Ascending aorta (tissue), 2 donors: ENCODE measurements at regions of chr11 and their contacts with region 1.

Region 1: DNA sequence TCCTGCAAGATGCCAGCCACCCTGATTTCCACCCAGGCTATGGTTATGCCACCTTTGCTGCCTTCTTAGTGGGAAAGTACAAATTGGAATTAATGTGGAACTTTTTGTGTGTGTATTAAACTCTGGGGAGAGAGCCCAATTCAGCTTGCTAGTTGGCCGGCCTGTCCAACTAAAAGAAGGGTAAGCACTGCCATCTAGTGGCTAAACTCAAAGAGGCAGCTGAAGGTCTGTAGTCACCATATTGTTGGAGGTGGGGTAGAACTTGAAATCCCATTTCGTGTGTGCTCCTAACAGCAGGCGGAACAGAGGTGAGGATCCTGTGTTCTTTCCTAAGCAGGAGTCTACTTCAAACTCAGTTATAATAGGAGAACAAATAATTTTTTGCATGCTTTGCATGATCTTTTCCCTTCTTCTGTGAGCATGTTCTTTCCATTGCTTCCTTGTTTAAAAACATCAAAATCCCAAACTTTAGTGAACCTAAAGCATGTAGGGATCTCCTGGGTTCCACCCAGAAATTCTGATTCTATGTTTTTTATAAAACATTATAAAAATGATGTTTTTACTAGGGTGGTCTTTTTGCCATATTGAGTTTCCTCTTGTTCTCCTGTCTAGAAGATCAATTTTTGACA is 138.8 kb upstream of the SORL1-AS1 start:
- DNase-seq: peak in 1 of 2 donors; percentile 85
- H3K4me3 ChIP-seq: no peak overlapping the region
- H3K27ac ChIP-seq: no peak overlapping the region
- H3K4me1 ChIP-seq: peaks cover 5 to 11% of the 10 kb centered on the region in 2 donors
- H3K27me3 ChIP-seq: no peaks in the 10 kb centered on the region
- CTCF ChIP-seq: peak; percentile 68 to 86 (median 84)

Region 2: GRCh38 chr11:121249039-121249663 is 342.4 kb before region 1 on chr11:
- intact Hi-C with region 1: loop called (anchors 1 kb)
- DNase-seq: no peak
- H3K4me3 ChIP-seq: no peak overlapping the region
- H3K27ac ChIP-seq: no peak overlapping the region
- H3K4me1 ChIP-seq: no peaks in the 10 kb centered on the region
- H3K27me3 ChIP-seq: no peaks in the 10 kb centered on the region
- CTCF ChIP-seq: peak; percentile 23 to 77 (median 71)

Region 3: DNA sequence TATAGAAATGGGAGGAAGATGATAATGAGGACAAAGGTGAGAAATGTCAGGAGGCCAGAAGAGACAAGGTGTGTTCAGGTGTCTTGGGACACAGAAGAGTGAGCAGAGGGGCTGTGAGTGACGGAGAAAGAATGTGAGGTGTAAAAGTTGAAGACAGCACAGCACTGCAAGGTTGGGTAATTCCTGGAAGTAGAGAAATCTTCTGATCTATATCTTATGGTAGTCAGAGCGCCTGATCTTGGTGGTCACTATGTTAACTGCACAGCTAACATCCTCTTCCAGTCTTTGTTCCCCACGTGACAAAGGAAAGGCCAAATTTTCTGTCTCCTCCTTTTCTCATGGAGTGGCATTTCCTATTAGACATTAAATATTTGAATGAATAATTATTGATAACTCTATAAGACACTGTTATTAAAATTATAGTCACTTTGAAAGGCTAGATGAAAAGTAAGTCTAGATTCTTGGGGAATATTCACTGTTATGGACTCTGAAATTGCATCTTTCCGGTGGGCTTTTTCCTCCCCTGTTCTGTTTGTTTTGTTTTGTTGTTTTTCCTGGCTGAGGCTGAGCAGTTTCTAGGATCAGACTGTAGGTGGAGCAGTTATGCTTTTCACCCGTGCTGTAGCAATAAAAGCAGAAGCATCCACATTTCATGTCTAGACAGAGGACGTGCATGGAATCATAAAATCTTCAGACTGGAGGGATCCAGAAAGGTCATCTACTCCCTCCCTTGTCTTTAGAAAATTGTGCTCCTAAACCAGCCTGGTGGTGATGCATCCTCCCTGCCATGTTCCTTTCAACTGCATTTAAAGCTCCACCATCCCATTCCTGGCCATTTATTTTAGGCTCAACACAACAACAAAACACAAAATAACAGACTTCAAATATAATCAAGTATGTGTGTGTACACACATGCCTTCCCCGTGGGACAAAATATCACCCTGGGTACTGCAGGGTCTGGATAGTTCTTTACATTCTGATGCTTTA is 272.4 kb before region 1 on chr11:
- intact Hi-C with region 1: loop called (anchors 1 kb)
- DNase-seq: no peak
- H3K4me3 ChIP-seq: no peak overlapping the region
- H3K27ac ChIP-seq: no peak overlapping the region
- H3K4me1 ChIP-seq: no peaks in the 10 kb centered on the region
- H3K27me3 ChIP-seq: no peaks in the 10 kb centered on the region
- CTCF ChIP-seq: peak; percentile 55 to 72 (median 59)

Region 4: GRCh38 chr11:121464352-121464946 is 127.1 kb before region 1 on chr11:
- intact Hi-C with region 1: loop called (anchors 5 kb)
- DNase-seq: peak in 1 of 2 donors; percentile 82
- H3K4me3 ChIP-seq: no peak overlapping the region
- H3K27ac ChIP-seq: peak overlapping the region; percentile 77 to 78
- H3K4me1 ChIP-seq: peaks cover 13 to 31% of the 10 kb centered on the region in 2 donors
- H3K27me3 ChIP-seq: no peaks in the 10 kb centered on the region
- CTCF ChIP-seq: no peak

Region 5: DNA sequence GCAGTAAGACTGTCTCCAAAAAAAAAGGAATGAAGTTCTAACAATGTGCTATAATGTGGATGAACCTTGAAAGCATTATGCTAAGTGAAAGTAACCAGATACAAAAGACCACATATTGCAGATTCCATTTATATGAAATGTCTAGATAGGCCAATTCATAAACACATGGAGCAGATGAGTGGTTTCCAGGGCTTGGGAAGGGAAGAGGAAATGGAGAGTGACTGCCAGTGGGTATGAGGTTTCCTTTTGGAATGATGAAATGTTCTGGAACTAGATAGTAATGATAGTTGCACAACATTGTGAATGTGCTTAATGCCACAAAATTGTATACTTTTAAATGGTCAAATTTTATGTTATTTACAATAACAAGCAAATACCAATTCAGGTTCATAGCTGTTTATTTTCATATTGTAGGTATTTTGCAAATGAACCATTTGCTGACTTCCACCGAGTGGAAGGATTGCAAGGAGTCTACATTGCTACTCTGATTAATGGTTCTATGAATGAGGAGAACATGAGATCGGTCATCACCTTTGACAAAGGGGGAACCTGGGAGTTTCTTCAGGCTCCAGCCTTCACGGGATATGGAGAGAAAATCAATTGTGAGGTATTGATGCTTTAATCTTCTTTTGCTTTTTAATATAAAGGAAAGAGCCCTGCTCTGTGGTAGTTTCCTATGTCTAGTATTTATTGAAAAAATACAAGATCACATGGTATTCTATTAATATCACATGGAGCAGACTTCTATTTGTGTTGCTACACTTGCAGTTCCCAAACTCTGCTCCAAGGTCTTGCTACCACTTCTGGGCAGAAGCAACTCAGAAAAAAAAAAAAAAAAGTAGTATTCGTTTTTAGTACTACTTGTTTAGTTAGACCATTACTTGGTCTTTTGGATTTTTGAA is 71.0 kb before region 1 on chr11:
- intact Hi-C with region 1: no loop called
- DNase-seq: no peak
- H3K4me3 ChIP-seq: no peak overlapping the region
- H3K27ac ChIP-seq: peak overlapping the region; percentile 76 to 80
- H3K4me1 ChIP-seq: peaks cover 4 to 23% of the 10 kb centered on the region in 2 donors
- H3K27me3 ChIP-seq: no peaks in the 10 kb centered on the region
- CTCF ChIP-seq: no peak

Region 6: DNA sequence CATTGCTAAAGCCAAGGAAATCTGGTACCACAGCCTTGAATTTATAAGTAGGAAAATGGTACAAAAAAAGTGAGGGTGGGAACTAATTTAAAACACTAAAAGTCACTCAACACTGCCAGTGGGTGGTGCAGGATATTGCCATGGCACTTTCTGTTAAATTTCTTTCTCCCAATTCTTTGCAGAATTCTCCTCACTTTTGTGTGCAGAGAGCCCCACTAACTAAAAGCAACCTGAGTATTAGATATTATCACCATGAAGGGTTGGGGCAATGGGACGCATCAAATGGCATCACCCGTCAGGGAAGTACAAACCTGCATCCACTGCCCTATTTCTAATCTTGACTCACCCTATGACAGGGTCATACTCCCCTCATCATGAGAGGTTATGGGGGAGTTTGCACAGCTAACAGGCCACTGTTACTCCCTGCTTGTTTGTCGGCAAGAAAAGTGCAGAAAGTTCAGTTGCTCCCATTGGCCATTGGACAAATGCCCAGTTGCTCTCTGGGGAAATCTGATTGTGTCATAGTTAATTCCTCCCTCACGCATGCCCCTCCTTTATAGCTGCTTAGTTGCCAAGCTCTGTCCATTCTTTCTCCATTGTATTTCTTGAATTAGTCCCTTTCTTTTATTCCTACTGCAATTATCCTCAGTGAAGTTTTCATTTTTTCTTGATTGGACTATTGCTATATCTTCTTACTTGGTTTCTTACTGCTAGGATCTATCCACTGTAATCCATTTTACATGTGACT is 618.3 kb after region 1 on chr11:
- intact Hi-C with region 1: loop called (anchors 5 kb)
- DNase-seq: peak in 1 of 2 donors; percentile 92
- H3K4me3 ChIP-seq: peak overlapping the region in 1 of 2 donors; percentile 6
- H3K27ac ChIP-seq: peak overlapping the region; percentile 86 to 90
- H3K4me1 ChIP-seq: peaks cover 5 to 62% of the 10 kb centered on the region in 2 donors
- H3K27me3 ChIP-seq: no peaks in the 10 kb centered on the region
- CTCF ChIP-seq: no peak